ENCODE measurements at regions of chr9 and their contacts with region 1.

Region 1: GRCh38 chr9:98263482-98264357 is 8.3 kb upstream of the TBC1D2 start:
- DNase-seq: peak; percentile 75 to 80
- ATAC-seq: peak; percentile 80 to 97 (median 95)
- H3K4me3 ChIP-seq: no peak overlapping the region
- H3K27ac ChIP-seq: no peak overlapping the region
- H3K4me1 ChIP-seq: no peaks in the 10 kb centered on the region
- H3K27me3 ChIP-seq: peaks cover 0 to 15% (median 0%) of the 10 kb centered on the region in 7 donors
- CTCF ChIP-seq: peak; percentile 73 to 97 (median 94)

Region 2: GRCh38 chr9:97632985-97633858 is 630.5 kb before region 1 on chr9 and contains the starts of genes NCBP1 and TSTD2:
- intact Hi-C with region 1: loop called in 1 of 10 experiments (anchors 10 kb)
- DNase-seq: peak; percentile 97
- ATAC-seq: peak; percentile 94 to 97 (median 95)
- H3K4me3 ChIP-seq: peak within 1 kb of the TSS; percentile 49 to 98 (median 94)
- H3K27ac ChIP-seq: peak within 1 kb of the TSS; percentile 93 to 99 (median 96)
- H3K4me1 ChIP-seq: peaks cover 2 to 78% (median 59%) of the 10 kb centered on the region in 9 donors
- H3K27me3 ChIP-seq: no peaks in the 10 kb centered on the region
- CTCF ChIP-seq: peak in 4 of 9 donors; percentile 4 to 40 (median 22)
- total RNA-seq, gene NCBP1: 11.8 to 20.4 (median 15.9) TPM
- total RNA-seq, gene TSTD2: 19.8 to 29.4 (median 23.4) TPM

Region 3: DNA sequence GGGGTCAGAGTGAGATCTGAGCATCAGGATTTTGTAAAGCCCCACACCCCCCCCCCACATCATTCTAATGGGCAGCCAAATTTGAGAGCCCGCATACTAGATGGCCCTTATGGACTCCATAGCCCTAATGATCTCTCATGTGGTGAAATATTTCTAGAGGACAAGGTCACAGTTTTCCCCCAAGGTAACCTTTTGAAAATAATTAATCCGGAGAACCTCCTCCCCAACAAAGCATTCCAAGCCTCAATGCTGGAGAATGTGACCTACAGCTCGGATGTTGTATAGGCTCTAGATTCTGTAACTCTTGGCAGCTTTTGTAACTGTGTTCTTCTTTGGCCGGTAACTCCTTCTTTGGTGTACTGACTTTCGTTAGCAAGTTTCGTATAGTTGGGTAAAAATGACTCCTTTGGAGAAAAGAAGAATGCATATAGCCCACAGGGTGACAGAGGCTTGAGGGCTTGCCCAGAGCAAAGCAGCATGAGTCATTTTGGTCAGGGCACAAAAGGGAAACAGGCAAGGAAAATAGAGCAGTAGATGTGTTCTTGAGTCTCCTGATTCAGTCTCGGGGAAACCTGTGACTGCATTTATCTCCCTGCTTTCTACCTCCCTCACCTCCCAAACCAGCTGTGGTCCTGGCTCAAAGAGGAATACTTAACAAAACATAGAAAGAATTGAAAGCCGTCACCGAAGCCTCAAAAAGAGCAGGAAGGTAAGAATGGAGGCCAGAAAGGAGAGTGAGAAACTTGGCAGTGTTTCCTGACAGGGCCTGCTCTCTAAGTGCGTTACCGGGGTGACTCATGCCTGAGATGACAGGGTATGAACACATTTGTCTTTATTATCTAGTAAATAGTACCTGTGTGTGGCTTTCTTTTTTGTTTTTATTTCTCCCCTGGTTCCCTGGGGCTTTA is 560.0 kb before region 1 on chr9:
- intact Hi-C with region 1: loop called in 2 of 10 experiments (anchors 5 to 10 kb)
- DNase-seq: no peak
- ATAC-seq: peak in 2 of 8 donors; percentile 32 to 62
- H3K4me3 ChIP-seq: no peak overlapping the region
- H3K27ac ChIP-seq: no peak overlapping the region
- H3K4me1 ChIP-seq: peaks cover 0 to 12% (median 0%) of the 10 kb centered on the region in 9 donors
- H3K27me3 ChIP-seq: peaks cover 0 to 26% (median 2%) of the 10 kb centered on the region in 7 donors
- CTCF ChIP-seq: no peak

Region 4: DNA sequence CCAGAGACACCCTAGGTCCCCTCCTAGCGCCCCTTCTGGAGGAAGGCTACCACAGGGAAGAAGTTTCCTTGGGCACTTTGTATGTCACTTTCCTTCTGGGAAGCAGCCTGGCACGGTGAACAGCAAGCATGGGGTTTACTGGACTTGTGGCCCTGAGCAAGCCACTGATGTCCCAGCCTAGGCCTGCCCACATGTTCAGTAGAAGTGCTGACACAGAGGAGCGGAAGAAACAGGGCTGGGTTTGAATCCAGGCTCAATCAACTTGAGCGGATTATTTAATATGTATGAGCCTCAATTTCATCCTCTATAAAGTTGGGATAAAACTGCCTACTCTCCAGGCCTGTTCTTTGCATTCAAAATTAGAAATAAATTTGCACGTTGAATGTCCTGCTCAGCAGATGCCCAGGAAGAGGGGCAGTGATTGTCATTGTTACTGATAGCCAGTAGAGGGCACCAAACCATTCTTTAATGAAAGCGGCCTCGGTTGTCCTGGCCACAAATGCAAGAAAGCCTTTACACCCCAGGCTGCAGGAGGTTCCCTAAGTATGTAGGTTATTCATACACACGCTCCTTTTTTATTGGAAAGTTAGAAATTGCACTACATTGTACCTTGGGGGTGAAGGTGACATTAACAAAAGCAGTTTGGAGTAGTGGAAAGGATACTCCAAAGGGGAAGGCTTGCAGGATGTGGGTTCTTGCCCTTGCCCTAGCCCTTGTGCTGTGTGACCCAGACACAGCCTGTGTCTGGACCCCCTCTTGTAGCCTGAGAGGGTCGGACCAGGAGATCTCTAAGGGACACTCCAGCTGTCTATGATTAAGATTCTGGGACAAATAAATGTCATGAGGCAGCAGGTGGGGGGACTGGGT is 553.1 kb before region 1 on chr9:
- intact Hi-C with region 1: loop called in 4 of 10 experiments (anchors 5 to 10 kb)
- DNase-seq: peak in 1 of 2 donors; percentile 34
- ATAC-seq: peak; percentile 55 to 89 (median 86)
- H3K4me3 ChIP-seq: no peak overlapping the region
- H3K27ac ChIP-seq: no peak overlapping the region
- H3K4me1 ChIP-seq: peaks cover 0 to 3% (median 0%) of the 10 kb centered on the region in 9 donors
- H3K27me3 ChIP-seq: peaks cover 0 to 44% (median 11%) of the 10 kb centered on the region in 7 donors
- CTCF ChIP-seq: peak; percentile 63 to 91 (median 87)

Region 5: GRCh38 chr9:97921959-97922724 is 341.6 kb before region 1 on chr9 and contains the start of gene TRMO:
- intact Hi-C with region 1: loop called in 7 of 10 experiments (anchors 1 to 5 kb)
- DNase-seq: peak; percentile 97 to 99
- ATAC-seq: peak; percentile 95 to 98 (median 97)
- H3K4me3 ChIP-seq: peak within 1 kb of the TSS; percentile 44 to 79 (median 64)
- H3K27ac ChIP-seq: peak within 1 kb of the TSS; percentile 90 to 100 (median 96)
- H3K4me1 ChIP-seq: peaks cover 6 to 43% (median 17%) of the 10 kb centered on the region in 9 donors
- H3K27me3 ChIP-seq: peaks cover 0 to 14% (median 0%) of the 10 kb centered on the region in 7 donors
- CTCF ChIP-seq: peak; percentile 38 to 94 (median 75)
- total RNA-seq, gene TRMO: 7.4 to 12.8 (median 8.2) TPM

Region 6: DNA sequence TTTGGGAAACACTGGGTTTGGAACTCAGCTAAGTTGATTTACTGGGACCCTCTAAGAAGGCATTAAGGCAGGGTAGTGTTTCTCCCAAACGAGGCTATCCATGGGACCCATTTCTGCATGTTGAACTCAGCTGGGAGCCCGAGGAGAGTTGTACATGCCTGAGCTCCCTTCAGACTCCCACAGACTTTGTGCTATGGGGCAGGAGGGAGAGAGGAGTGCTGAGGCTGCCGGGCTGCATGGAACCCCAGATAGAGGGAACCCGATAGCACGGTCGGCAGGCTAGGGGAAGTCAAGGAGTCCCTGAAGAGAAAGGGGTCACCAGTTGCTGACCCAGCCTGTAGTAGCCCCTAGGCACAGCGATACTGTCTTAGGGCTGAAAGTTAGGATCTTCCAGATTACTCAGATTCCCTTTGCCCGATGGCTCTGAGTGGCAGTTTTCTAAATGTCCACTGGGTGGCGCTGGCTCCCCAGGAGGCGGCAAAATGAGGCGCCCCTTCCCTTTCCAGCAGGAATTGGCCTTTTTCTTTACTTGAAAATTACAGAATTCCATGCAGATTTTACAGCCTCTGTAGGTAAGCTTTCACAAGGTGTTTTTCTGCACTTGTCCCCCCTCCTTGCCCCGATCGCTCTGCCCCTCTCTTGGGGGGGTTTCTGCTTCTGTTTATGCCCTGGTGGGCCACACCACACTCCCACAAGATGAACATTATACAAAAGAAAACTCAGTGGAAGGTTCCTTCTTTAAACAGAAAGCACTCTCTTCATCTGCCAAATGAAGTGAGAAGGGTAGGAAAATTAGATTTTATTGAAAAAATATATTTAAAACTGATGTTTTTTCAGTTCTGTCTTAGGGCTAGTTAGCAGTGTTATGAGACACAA is 189.4 kb before region 1 on chr9:
- intact Hi-C with region 1: loop called in 9 of 10 experiments (anchors 2 to 10 kb)
- DNase-seq: peak; percentile 38 to 59
- ATAC-seq: peak in 6 of 8 donors; percentile 24 to 71 (median 62)
- H3K4me3 ChIP-seq: no peak overlapping the region
- H3K27ac ChIP-seq: peak overlapping the region in 1 of 10 donors; percentile 76
- H3K4me1 ChIP-seq: peaks cover 0 to 24% (median 9%) of the 10 kb centered on the region in 9 donors
- H3K27me3 ChIP-seq: no peaks in the 10 kb centered on the region
- CTCF ChIP-seq: peak; percentile 79 to 97 (median 94)

Region 7: GRCh38 chr9:98207606-98208005 is 56.1 kb before region 1 on chr9:
- intact Hi-C with region 1: loop called (anchors 1 to 5 kb)
- DNase-seq: no peak
- ATAC-seq: no peak
- H3K4me3 ChIP-seq: no peak overlapping the region
- H3K27ac ChIP-seq: no peak overlapping the region
- H3K4me1 ChIP-seq: peaks cover 0 to 7% (median 0%) of the 10 kb centered on the region in 9 donors
- H3K27me3 ChIP-seq: no peaks in the 10 kb centered on the region
- CTCF ChIP-seq: no peak

Region 8: DNA sequence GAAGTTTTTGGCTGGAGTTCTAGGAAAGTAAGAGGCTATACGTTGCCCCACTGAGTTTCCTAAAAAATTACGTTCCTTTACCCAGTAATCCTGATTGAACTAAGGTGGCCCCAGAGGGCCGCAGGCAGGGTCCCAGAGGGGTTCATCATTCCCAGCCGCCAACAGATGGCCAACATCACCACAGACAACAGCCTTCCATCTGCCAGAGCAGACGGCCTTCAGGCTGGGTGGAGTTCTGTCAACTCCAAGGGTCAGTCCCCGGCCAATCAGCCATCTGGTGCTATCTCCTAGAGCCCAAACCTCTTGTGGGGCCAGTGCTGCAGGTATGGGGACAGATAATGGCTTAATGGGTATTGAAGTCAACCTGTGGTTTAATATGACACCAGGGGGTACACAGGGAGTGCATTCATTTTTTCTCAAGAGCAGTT is 38.7 kb before region 1 on chr9:
- intact Hi-C with region 1: no loop called
- DNase-seq: no peak
- ATAC-seq: no peak
- H3K4me3 ChIP-seq: no peak overlapping the region
- H3K27ac ChIP-seq: no peak overlapping the region
- H3K4me1 ChIP-seq: peaks cover 0 to 15% (median 0%) of the 10 kb centered on the region in 9 donors
- H3K27me3 ChIP-seq: no peaks in the 10 kb centered on the region
- CTCF ChIP-seq: no peak

Region 9: GRCh38 chr9:98726735-98727134 is 463.0 kb after region 1 on chr9:
- intact Hi-C with region 1: no loop called
- DNase-seq: peak in 1 of 2 donors; percentile 43
- ATAC-seq: peak in 7 of 8 donors; percentile 42 to 75 (median 55)
- H3K4me3 ChIP-seq: no peak overlapping the region
- H3K27ac ChIP-seq: peak overlapping the region in 2 of 10 donors; percentile 44 to 66
- H3K4me1 ChIP-seq: peaks cover 0 to 6% (median 0%) of the 10 kb centered on the region in 9 donors
- H3K27me3 ChIP-seq: peaks cover 0 to 29% (median 21%) of the 10 kb centered on the region in 7 donors
- CTCF ChIP-seq: no peak